ENCODE measurements at regions of chr15 and their contacts with region 1.

Region 1: GRCh38 chr15:65916664-65917406 is 47.5 kb downstream of the RAB11A start:
- DNase-seq: peak in 4 of 5 donors; percentile 43 to 69 (median 57)
- ATAC-seq: peak; percentile 74 to 93 (median 90)
- H3K4me3 ChIP-seq: no peak overlapping the region
- H3K27ac ChIP-seq: no peak overlapping the region
- H3K4me1 ChIP-seq: peaks cover 0 to 19% (median 2%) of the 10 kb centered on the region in 12 donors
- H3K27me3 ChIP-seq: no peaks in the 10 kb centered on the region
- CTCF ChIP-seq: peak; percentile 31 to 68 (median 56)
- POLR2A ChIP-seq: no peak

Region 2: GRCh38 chr15:66153549-66154415 is 236.9 kb after region 1 on chr15:
- intact Hi-C with region 1: loop called in 1 of 10 experiments (anchors 5 kb)
- DNase-seq: no peak
- ATAC-seq: no peak
- H3K4me3 ChIP-seq: no peak overlapping the region
- H3K27ac ChIP-seq: no peak overlapping the region
- H3K4me1 ChIP-seq: peaks cover 0 to 4% (median 0%) of the 10 kb centered on the region in 12 donors
- H3K27me3 ChIP-seq: peaks cover 0 to 24% (median 6%) of the 10 kb centered on the region in 9 donors
- CTCF ChIP-seq: no peak
- POLR2A ChIP-seq: no peak

Region 3: GRCh38 chr15:66188464-66188863 is 271.6 kb after region 1 on chr15:
- intact Hi-C with region 1: loop called in 3 of 10 experiments (anchors 5 to 10 kb)
- DNase-seq: no peak
- ATAC-seq: peak in 1 of 4 donors; percentile 44
- H3K4me3 ChIP-seq: no peak overlapping the region
- H3K27ac ChIP-seq: no peak overlapping the region
- H3K4me1 ChIP-seq: no peaks in the 10 kb centered on the region
- H3K27me3 ChIP-seq: peaks cover 0 to 42% (median 9%) of the 10 kb centered on the region in 9 donors
- CTCF ChIP-seq: peak in 2 of 12 donors; percentile 3 to 20
- POLR2A ChIP-seq: no peak

Region 4: GRCh38 chr15:66287461-66288057 is 370.7 kb after region 1 on chr15:
- intact Hi-C with region 1: loop called in 8 of 10 experiments (anchors 1 to 5 kb)
- DNase-seq: no peak
- ATAC-seq: no peak
- H3K4me3 ChIP-seq: no peak overlapping the region
- H3K27ac ChIP-seq: no peak overlapping the region
- H3K4me1 ChIP-seq: peaks cover 0 to 11% (median 5%) of the 10 kb centered on the region in 12 donors
- H3K27me3 ChIP-seq: no peaks in the 10 kb centered on the region
- CTCF ChIP-seq: peak; percentile 35 to 76 (median 62)
- POLR2A ChIP-seq: no peak

Measured in heart left ventricle (tissue), 16 donors.